Activated T-helper 1 cell treated with anti-CD3 and anti-CD28 coated beads, Interleukin-12 subunit alpha, Interleukin-12 subunit beta, Interleukin-2, Interleukin-4 antibody, amounts not matched to agents 30 ng/mL and 10 ng/mL and 1 ng/mL, durations not matched to agents 14 hours and 24 hours and 36 hours (primary cell): ENCODE measurements at regions of chr17 and their contacts with region 1.

Region 1: DNA sequence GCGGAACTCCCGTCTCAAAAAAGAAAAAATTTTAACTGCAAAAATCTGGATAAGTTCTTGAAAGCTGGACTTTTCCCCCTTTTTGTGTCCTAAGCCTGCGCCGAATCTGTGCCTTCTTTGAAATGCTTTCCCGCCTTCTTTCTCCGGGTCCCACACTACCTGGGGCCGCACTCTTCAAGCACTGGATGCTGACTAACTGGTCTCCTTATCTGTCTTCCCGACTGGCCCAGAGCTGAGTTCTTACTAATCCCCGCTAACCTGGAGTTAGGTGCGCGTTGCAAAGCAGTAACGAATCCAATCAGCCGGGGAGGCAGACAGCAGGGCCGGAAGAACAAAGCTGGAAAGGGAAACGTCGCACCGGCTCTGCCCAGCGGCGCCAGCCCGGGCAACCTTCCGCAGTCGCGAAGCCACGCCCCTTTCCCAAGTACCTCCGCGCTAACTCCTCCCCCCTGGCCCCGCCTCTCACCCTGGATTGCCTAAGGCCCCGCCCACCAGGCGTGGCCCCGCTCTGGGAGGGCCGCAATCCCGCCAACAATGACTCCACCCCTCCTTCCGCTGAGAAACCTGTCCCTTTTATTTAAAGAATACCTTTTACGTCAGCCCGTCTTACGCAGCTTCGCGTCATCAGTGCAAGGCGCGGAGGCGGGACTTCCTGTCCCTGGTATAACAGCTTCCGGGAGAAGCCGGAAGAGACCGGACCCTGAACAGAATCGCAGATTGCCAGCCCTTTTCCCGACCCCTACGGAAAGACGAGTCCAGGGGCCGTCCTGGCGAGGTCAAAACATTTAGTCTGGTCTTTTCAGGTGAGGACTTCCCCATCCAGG is at the start of gene TMUB2:
- DNase-seq: peak; percentile 99
- H3K4me3 Mint-ChIP-seq: peak within 1 kb of the TSS; percentile 100
- H3K27ac Mint-ChIP-seq: peak within 1 kb of the TSS; percentile 99
- H3K4me1 Mint-ChIP-seq: peaks cover 31% of the 10 kb centered on the region
- H3K27me3 Mint-ChIP-seq: no peaks in the 10 kb centered on the region
- total RNA-seq, gene TMUB2: 17.3 and 18.7 TPM in 2 replicates

Region 2: GRCh38 chr17:43669971-43670644 is 516.4 kb before region 1 on chr17:
- intact Hi-C with region 1: no loop called
- DNase-seq: no peak
- H3K4me3 Mint-ChIP-seq: no peak overlapping the region
- H3K27ac Mint-ChIP-seq: no peak overlapping the region
- H3K4me1 Mint-ChIP-seq: peaks cover 9% of the 10 kb centered on the region
- H3K27me3 Mint-ChIP-seq: peaks cover 9% of the 10 kb centered on the region

Region 3: DNA sequence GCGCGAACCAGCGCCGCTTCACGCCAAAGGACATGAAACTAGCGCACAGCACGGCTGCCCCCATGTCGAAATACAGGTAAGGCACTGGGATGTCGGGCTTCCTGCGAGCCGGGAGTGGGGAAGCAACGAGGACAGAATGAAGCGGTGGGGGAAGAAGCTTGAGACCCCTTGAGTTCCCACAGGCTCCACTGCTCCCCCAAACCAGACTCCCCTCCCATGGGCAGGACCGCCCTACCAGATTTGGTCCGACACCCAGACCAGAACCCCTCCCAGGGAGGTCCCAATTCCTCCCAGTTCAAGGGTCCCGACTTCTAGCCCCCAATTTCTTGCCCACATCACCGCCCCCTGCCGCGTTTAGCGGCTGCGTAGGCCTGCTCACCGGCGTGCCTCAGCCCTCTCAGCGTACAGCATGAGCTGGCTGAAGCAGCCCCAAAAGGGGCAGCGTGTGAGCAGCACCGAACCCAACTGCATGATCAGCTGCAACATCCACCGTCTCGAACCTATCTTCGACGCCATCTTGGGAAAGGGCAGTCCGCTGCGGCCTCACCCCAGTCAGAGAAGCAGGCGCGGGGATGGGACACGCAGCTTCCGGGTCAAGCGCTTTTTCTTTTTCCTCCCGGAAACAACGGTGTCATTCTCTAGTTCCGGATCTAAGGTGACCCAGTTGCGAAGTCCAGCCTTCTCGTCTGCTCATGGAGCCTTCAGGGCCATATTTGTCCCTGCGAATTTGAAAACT is 171.9 kb before region 1 on chr17 and contains the start of gene TMEM101:
- intact Hi-C with region 1: loop called (anchors 1 kb)
- DNase-seq: peak; percentile 84
- H3K4me3 Mint-ChIP-seq: peak within 1 kb of the TSS; percentile 100
- H3K27ac Mint-ChIP-seq: peak within 1 kb of the TSS; percentile 98
- H3K4me1 Mint-ChIP-seq: peaks cover 16% of the 10 kb centered on the region
- H3K27me3 Mint-ChIP-seq: no peaks in the 10 kb centered on the region
- total RNA-seq, gene TMEM101: 31.6 and 32.8 TPM in 2 replicates

Region 4: GRCh38 chr17:44123356-44124117 is 63.0 kb before region 1 on chr17 and contains the start of gene HDAC5:
- intact Hi-C with region 1: loop called (anchors 1 kb)
- DNase-seq: peak; percentile 92
- H3K4me3 Mint-ChIP-seq: peak within 1 kb of the TSS; percentile 91
- H3K27ac Mint-ChIP-seq: peak within 1 kb of the TSS; percentile 96
- H3K4me1 Mint-ChIP-seq: peaks cover 25% of the 10 kb centered on the region
- H3K27me3 Mint-ChIP-seq: peaks cover 12% of the 10 kb centered on the region
- total RNA-seq, gene HDAC5: 20.6 and 22.8 TPM in 2 replicates

Region 5: GRCh38 chr17:44199553-44200477 is 13.3 kb after region 1 on chr17 and contains the start of gene ATXN7L3:
- intact Hi-C with region 1: loop called (anchors 1 kb)
- DNase-seq: peak; percentile 97
- H3K4me3 Mint-ChIP-seq: peak within 1 kb of the TSS; percentile 94
- H3K27ac Mint-ChIP-seq: peak within 1 kb of the TSS; percentile 90
- H3K4me1 Mint-ChIP-seq: peaks cover 48% of the 10 kb centered on the region
- H3K27me3 Mint-ChIP-seq: no peaks in the 10 kb centered on the region
- total RNA-seq, gene ATXN7L3: 125 and 126 TPM in 2 replicates

Region 6: GRCh38 chr17:44324571-44325275 is 138.2 kb after region 1 on chr17 and contains the start of gene SLC25A39:
- intact Hi-C with region 1: loop called (anchors 1 kb)
- DNase-seq: peak; percentile 96
- H3K4me3 Mint-ChIP-seq: peak within 1 kb of the TSS; percentile 93
- H3K27ac Mint-ChIP-seq: peak within 1 kb of the TSS; percentile 97
- H3K4me1 Mint-ChIP-seq: peaks cover 10% of the 10 kb centered on the region
- H3K27me3 Mint-ChIP-seq: no peaks in the 10 kb centered on the region
- total RNA-seq, gene SLC25A39: 169 and 180 TPM in 2 replicates

Region 7: GRCh38 chr17:44424828-44425461 is 238.4 kb after region 1 on chr17:
- intact Hi-C with region 1: no loop called
- DNase-seq: no peak
- H3K4me3 Mint-ChIP-seq: no peak overlapping the region
- H3K27ac Mint-ChIP-seq: peak overlapping the region; percentile 61
- H3K4me1 Mint-ChIP-seq: peaks cover 24% of the 10 kb centered on the region
- H3K27me3 Mint-ChIP-seq: no peaks in the 10 kb centered on the region

Region 8: DNA sequence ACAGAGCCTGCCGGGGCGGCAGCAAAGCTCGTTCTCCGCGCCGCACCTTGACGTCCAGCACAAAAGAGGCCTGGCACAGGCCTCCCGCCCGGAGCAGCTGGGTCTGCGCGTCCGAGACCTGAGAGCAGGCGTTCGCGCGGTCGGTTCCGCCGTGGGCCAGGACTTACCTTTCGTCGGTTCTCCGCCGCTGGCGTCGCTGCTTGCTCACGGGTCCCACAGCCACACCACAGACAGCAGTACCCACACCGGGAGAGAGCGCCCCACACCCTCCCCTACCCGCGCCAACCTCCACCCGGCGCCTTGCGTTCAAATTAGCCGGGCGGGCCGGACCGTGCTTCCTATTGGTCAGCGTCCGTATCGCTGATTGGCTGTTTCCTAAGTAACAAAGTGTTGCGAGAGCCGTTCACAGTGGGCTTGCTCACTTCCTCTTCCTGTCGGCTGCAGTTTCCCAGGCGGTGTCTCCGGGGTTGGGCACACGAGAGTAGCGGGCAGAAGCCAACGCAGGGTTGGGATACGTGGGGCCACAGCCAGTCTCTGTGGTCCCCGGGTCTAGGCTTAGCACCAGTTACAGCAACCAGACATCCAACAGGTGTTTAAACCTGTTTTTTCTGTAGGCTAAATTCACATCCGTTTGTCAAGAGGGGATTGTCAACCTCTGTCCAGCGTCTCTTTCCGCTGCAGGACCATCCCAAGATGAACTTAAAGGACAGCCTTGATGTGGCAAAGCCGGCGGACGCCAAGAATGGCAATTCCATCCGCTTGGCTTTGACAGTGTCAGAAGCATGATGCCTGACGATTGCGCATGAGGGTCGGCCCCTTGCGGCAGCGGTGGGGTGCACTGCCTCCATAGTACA is 761.2 kb after region 1 on chr17 and contains the start of gene KIF18B:
- intact Hi-C with region 1: loop called (anchors 5 kb)
- DNase-seq: peak; percentile 90
- H3K4me3 Mint-ChIP-seq: peak within 1 kb of the TSS; percentile 95
- H3K27ac Mint-ChIP-seq: peak within 1 kb of the TSS; percentile 92
- H3K4me1 Mint-ChIP-seq: peaks cover 37% of the 10 kb centered on the region
- H3K27me3 Mint-ChIP-seq: peaks cover 2% of the 10 kb centered on the region
- total RNA-seq, gene KIF18B: 41.4 and 42.8 TPM in 2 replicates